GM12878 (cell line): ENCODE measurements at regions of chr14 and their contacts with region 1.

Region 1: GRCh38 chr14:46581036-46581671 is 70.4 kb downstream of the RPL10L start:
- DNase-seq: no peak
- ATAC-seq: peak; percentile 42; the same call in 2 of the 3 replicates
- H3K4me3 ChIP-seq: no peak overlapping the region
- H3K27ac ChIP-seq: no peak overlapping the region
- H3K4me1 ChIP-seq: no peaks in the 10 kb centered on the region
- H3K27me3 ChIP-seq: no peaks in the 10 kb centered on the region
- CTCF ChIP-seq: peak; percentile 55 to 60 (median 60); a peak in 5 of 6 replicates
- EP300 ChIP-seq: no peak
- POLR2A ChIP-seq: no peak
- RAD21 ChIP-seq: peak; percentile 87

Region 2: DNA sequence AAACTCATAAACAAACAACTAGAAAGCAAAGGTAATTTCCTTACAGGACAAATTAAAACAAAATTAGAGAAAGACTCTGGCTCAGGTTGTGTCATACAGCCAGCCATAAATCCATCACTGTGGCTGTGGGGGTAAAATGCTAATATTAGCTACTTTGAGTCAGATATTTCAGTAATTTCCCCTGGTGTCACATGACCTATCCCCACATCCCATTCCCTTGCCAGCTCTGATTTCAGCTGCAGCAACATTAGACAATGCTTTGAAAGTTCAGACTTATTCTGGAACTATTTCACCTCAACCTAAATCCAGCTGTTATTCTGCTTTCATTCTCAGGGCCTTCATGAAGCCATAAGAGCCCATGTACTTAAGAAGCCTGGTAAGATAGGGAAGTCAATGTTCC is 15.1 kb after region 1 on chr14:
- CTCF ChIA-PET with region 1: interaction called, 16 read pairs
- POLR2A ChIA-PET with region 1: no interaction called
- RAD21 ChIA-PET with region 1: interaction called, 3 read pairs
- SMC1A ChIA-PET with region 1: interaction called, 10 read pairs
- in situ Hi-C with region 1: no loop called
- intact Hi-C with region 1: no loop called
- DNase-seq: no peak
- ATAC-seq: no peak
- H3K4me3 ChIP-seq: no peak overlapping the region
- H3K27ac ChIP-seq: no peak overlapping the region
- H3K4me1 ChIP-seq: no peaks in the 10 kb centered on the region
- H3K27me3 ChIP-seq: no peaks in the 10 kb centered on the region
- CTCF ChIP-seq: no peak
- EP300 ChIP-seq: no peak
- POLR2A ChIP-seq: no peak
- RAD21 ChIP-seq: no peak

Region 3: GRCh38 chr14:46780873-46781272 is 199.7 kb after region 1 on chr14:
- CTCF ChIA-PET with region 1: no interaction called
- POLR2A ChIA-PET with region 1: no interaction called
- RAD21 ChIA-PET with region 1: no interaction called
- SMC1A ChIA-PET with region 1: no interaction called
- in situ Hi-C with region 1: no loop called
- intact Hi-C with region 1: no loop called
- DNase-seq: no peak
- ATAC-seq: no peak
- H3K4me3 ChIP-seq: no peak overlapping the region
- H3K27ac ChIP-seq: no peak overlapping the region
- H3K4me1 ChIP-seq: no peaks in the 10 kb centered on the region
- H3K27me3 ChIP-seq: no peaks in the 10 kb centered on the region
- CTCF ChIP-seq: no peak
- EP300 ChIP-seq: no peak
- POLR2A ChIP-seq: no peak
- RAD21 ChIP-seq: no peak

Region 4: DNA sequence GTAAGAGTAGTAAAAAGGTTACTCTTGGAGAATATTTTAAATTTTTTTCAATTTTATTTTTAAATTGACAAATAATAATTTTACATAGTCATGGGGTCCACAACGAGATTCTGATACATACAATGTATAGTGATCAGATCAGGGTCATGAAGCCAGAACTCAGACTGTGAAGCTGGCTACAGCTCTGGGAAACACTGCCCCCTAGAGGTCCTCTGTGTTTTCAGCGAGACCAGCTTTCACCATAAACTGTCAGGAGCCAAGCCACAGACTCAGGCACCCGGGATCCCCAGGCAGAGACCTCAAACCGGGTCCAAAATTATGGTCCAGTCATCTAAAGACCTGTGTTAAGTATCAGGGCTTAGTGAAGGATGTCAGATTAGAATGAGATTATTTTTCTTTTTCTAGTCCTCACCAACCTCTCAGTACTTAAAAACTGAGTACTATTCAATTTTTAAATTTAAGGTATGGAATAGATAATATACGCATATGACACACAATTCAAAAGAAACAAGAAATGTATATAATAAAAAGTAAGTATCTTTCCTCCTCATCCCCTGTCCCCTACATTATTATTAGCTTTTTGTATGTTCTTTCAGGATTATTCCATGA is 697.2 kb after region 1 on chr14:
- CTCF ChIA-PET with region 1: interaction called, 8 read pairs
- POLR2A ChIA-PET with region 1: no interaction called
- RAD21 ChIA-PET with region 1: interaction called, 4 read pairs
- SMC1A ChIA-PET with region 1: interaction called, 3 read pairs
- in situ Hi-C with region 1: loop called (anchors 10 kb)
- intact Hi-C with region 1: loop called (anchors 1 kb)
- DNase-seq: no peak
- ATAC-seq: peak; percentile 94
- H3K4me3 ChIP-seq: no peak overlapping the region
- H3K27ac ChIP-seq: no peak overlapping the region
- H3K4me1 ChIP-seq: no peaks in the 10 kb centered on the region
- H3K27me3 ChIP-seq: no peaks in the 10 kb centered on the region
- CTCF ChIP-seq: peak; percentile 55 to 72 (median 68)
- EP300 ChIP-seq: no peak
- POLR2A ChIP-seq: no peak
- RAD21 ChIP-seq: peak; percentile 59

Region 5: DNA sequence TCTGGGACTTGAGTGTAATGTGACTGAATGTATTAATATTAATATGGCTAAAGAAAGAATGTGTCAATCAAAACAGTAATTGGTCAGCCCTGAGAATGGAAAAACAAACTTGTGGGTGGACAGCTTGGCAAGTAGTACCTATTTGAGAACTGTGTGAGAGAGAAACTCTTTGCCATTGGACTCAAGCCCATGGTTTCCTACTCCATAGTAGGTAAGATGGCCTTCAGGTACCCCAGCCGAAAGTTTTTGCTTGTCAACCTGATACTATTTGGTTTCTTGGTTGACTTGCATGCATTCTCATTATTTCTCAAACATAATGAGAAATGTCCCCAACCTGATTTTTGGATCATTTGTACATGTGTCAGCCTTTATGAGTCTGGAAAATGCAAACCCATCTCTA is 703.1 kb after region 1 on chr14:
- CTCF ChIA-PET with region 1: interaction called, 3 read pairs
- POLR2A ChIA-PET with region 1: no interaction called
- RAD21 ChIA-PET with region 1: no interaction called
- SMC1A ChIA-PET with region 1: no interaction called
- in situ Hi-C with region 1: loop called (anchors 10 kb)
- intact Hi-C with region 1: no loop called
- DNase-seq: no peak
- ATAC-seq: no peak
- H3K4me3 ChIP-seq: no peak overlapping the region
- H3K27ac ChIP-seq: no peak overlapping the region
- H3K4me1 ChIP-seq: no peaks in the 10 kb centered on the region
- H3K27me3 ChIP-seq: no peaks in the 10 kb centered on the region
- CTCF ChIP-seq: no peak
- EP300 ChIP-seq: no peak
- POLR2A ChIP-seq: no peak
- RAD21 ChIP-seq: no peak

Region 6: DNA sequence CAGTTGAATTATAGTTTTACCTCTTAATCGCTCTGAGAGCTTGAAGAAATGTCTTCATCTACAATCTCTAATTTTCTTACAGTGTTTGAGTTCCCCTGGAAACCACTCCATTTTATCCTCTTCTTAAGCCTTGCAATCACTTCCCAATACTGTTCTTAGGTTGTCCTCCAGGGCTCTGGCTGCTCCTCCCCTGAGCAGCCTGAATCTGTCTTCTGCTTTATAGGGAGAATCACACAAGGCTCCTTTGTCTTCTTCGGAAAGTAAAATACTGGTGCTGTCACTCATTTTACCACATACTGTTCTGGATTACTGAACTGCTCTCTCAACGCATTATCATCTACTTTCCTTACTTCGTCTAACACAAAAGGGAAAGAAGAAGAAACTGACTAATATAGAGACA is 960.5 kb after region 1 on chr14:
- CTCF ChIA-PET with region 1: interaction called, 8 read pairs
- POLR2A ChIA-PET with region 1: no interaction called
- RAD21 ChIA-PET with region 1: no interaction called
- SMC1A ChIA-PET with region 1: no interaction called
- in situ Hi-C with region 1: no loop called
- intact Hi-C with region 1: loop called (anchors 5 kb)
- DNase-seq: no peak
- ATAC-seq: no peak
- H3K4me3 ChIP-seq: no peak overlapping the region
- H3K27ac ChIP-seq: no peak overlapping the region
- H3K4me1 ChIP-seq: no peaks in the 10 kb centered on the region
- H3K27me3 ChIP-seq: no peaks in the 10 kb centered on the region; a peak in 1 of 4 replicates
- CTCF ChIP-seq: no peak
- EP300 ChIP-seq: no peak
- POLR2A ChIP-seq: no peak
- RAD21 ChIP-seq: no peak